ENCODE measurements at regions of chr1 and their contacts with region 1.

Region 1: DNA sequence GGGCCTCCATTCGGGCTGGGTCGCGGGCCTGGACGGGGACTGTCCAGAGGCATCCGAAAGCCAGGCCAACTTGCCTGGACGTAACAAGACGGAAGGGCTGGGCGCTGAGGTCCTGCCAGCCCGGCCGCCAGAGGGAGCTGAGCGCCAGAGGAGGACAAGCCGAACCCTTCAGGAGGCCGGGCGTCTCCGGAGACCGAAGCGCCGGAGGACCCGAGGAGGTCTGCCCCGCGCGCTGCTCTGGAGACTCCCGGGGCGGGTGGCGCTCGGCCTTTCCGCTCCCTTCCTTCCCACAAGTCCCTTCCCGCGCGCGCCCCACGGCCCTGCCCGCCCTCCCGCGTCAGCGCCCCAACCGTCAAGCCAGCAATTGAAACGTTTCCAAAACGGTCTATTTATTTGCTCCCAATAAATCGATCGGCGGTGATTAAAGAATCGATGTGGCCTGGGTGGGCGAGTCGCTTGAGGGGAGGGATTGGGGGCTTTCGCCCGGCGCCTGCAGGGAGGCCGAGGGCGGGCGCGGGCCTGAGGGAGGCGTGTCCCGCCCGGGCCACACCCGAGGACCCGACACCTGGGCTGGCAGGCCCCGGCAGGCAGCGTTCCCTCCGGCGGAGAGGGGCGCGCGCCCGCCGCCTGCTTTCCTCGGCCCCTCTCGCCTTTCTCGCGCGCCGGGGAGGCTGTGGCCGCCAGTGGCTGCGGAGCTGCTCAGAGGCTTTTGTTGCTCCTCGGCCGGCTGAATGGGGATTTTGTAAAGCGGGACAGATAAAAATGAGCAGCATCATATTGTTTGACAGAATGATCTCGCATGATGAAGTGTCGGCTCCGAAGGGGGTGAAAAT is 5.2 kb upstream of the FOXD3 start:
- DNase-seq: peak; percentile 59
- H3K4me3 Mint-ChIP-seq: peak overlapping the region; percentile 48
- H3K27ac Mint-ChIP-seq: peak overlapping the region; percentile 3
- H3K4me1 Mint-ChIP-seq: peaks cover 34% of the 10 kb centered on the region
- H3K27me3 Mint-ChIP-seq: peaks cover 75% of the 10 kb centered on the region

Region 2: DNA sequence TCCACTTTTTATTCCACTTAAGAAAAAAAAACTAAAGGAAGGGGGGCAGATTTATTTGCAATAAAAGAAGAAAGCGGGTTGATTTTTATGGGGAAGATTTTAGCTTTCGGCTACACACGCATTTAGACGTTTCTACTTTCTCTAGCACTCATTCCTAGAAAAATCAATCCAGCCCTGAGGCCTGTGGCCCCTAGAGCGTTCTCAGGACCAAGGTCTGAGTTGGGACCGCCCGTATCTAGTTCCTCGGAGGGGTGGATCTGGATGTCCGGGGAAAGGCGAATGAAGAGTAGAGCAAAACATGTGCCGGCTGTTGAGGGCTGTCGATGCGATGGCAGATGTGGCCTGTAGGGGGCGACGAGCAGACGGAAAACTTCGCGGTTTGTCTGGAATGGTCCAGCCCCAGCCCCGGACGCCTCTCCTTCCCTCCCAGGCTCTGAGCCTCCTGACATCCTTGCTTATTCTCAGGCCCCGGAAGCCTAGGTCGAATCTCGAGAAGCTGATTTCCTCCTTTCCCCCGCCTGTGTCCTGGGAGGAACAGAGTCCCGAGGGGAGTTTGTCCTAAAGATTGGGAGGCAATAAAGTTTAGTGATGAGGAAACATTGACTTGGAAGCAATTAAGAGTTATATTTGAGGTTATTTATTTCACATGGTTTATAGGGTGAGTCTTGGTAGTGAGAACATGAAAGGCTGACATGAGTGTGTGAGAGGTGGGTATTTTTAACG is 10.4 kb after region 1 on chr1:
- CTCF ChIA-PET with region 1: interaction called, 19 read pairs
- POLR2A ChIA-PET with region 1: no interaction called
- DNase-seq: peak; percentile 45
- H3K4me3 Mint-ChIP-seq: peak overlapping the region; percentile 15
- H3K27ac Mint-ChIP-seq: peak overlapping the region; percentile 1
- H3K4me1 Mint-ChIP-seq: peaks cover 34% of the 10 kb centered on the region
- H3K27me3 Mint-ChIP-seq: peaks cover 75% of the 10 kb centered on the region